Right cardiac atrium (tissue), 5 donors: ENCODE measurements at regions of chr11 and their contacts with region 1.

Region 1: GRCh38 chr11:121722431-121723245 is 269.9 kb upstream of the SORL1-AS1 start:
- DNase-seq: peak; percentile 92 to 95 (median 94)
- ATAC-seq: peak; percentile 98
- H3K4me3 ChIP-seq: peak overlapping the region; percentile 52
- H3K27ac ChIP-seq: peak overlapping the region; percentile 80
- H3K4me1 ChIP-seq: no peaks in the 10 kb centered on the region
- H3K27me3 ChIP-seq: no peaks in the 10 kb centered on the region

Region 2: DNA sequence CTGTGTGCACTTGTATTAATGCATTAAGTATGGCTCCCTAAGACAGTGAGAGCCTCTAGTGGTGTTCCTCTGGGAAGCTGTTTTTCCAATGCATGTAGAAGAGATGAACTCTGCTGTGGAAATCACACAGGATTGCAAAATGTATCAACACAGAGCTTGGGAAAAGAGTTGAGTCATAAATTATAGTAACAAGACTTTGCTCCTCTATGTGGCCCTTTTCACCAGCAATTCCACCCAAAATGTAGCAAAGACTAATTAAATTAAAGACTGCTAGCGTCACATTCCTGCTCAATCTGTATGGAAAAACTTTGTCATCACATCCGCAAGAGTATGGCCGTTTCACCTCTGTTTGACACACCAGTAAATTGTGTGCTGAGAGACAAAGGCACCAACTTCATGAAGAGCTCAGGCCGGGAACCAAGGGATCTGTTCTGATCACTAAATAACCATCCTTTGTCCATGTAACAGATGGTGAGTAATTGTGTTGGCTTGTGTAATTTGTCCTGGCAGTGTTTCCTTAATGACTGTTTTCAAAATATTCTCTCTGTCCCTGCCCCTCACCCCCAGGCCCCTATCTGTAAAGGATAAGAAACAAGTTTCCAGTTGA is 60.7 kb before region 1 on chr11:
- intact Hi-C with region 1: loop called in 1 of 4 experiments (anchors 10 kb)
- DNase-seq: peak in 2 of 3 donors; percentile 38 to 44
- ATAC-seq: peak; percentile 69 to 80
- H3K4me3 ChIP-seq: no peak overlapping the region
- H3K27ac ChIP-seq: peak overlapping the region; percentile 20
- H3K4me1 ChIP-seq: no peaks in the 10 kb centered on the region
- H3K27me3 ChIP-seq: no peaks in the 10 kb centered on the region

Region 3: GRCh38 chr11:121767433-121767832 is 44.8 kb after region 1 on chr11:
- intact Hi-C with region 1: no loop called
- DNase-seq: no peak
- ATAC-seq: no peak
- H3K4me3 ChIP-seq: no peak overlapping the region
- H3K27ac ChIP-seq: no peak overlapping the region
- H3K4me1 ChIP-seq: no peaks in the 10 kb centered on the region
- H3K27me3 ChIP-seq: no peaks in the 10 kb centered on the region